Heart right ventricle (tissue), 16 donors: ENCODE measurements at regions of chr6 and their contacts with region 1.

Region 1: DNA sequence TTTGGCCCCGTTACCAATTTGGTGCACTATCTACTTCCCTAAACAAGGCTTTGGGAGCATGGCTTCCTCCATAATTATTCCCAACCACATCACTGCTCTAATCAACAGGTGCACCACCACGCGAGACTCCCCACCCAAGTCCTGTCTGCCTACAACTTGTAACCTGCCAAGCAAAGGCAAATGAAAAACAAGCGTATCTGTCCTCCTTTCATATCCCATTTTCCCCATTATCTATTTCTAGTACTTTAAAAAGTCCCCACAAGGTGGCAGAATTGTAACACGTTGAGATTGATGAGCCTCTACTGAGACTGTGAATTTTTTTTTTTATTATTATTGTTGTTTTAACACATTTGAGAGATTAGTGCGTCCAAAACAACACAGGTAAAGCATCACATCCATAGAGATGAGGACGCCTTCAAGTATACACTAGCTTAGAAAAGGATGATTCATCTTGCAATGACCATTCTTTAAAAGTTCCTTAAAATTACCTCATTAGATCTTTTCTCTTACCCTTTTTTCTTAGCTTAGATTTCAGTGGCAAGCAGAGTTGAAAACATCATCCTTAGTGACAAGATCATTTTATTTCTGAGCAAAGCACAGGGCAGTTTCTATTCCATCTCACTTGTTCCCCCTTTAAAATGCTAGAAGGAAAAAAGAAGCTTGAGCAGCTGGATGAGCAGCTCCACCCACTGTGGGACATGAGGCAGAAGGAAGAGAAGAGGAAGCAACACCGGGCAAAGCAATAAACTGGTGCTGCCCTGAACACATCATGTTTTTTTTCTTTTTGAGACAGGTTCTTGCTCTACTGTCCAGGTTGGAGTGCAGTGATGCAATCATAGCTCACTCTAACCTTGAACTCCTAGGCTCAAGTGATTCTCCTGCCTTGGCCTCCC is 210.8 kb downstream of the ARHGAP18 start:
- DNase-seq: no peak
- ATAC-seq: peak; percentile 18 to 57 (median 34)
- H3K4me3 ChIP-seq: no peak overlapping the region
- H3K27ac ChIP-seq: peak overlapping the region in 2 of 10 donors; percentile 33 to 53
- H3K4me1 ChIP-seq: peaks cover 3 to 64% (median 30%) of the 10 kb centered on the region in 9 donors
- H3K27me3 ChIP-seq: no peaks in the 10 kb centered on the region
- CTCF ChIP-seq: peak; percentile 27 to 75 (median 62)

Region 2: GRCh38 chr6:129454488-129454887 is 44.7 kb before region 1 on chr6:
- intact Hi-C with region 1: no loop called
- DNase-seq: no peak
- ATAC-seq: no peak
- H3K4me3 ChIP-seq: no peak overlapping the region
- H3K27ac ChIP-seq: no peak overlapping the region
- H3K4me1 ChIP-seq: peaks cover 0 to 8% (median 0%) of the 10 kb centered on the region in 9 donors
- H3K27me3 ChIP-seq: no peaks in the 10 kb centered on the region
- CTCF ChIP-seq: no peak

Region 3: GRCh38 chr6:129567374-129567773 is 68.2 kb after region 1 on chr6:
- intact Hi-C with region 1: loop called in 4 of 10 experiments (anchors 5 to 10 kb)
- DNase-seq: no peak
- ATAC-seq: peak in 1 of 8 donors; percentile 33
- H3K4me3 ChIP-seq: no peak overlapping the region
- H3K27ac ChIP-seq: no peak overlapping the region
- H3K4me1 ChIP-seq: no peaks in the 10 kb centered on the region
- H3K27me3 ChIP-seq: no peaks in the 10 kb centered on the region
- CTCF ChIP-seq: peak in 7 of 9 donors; percentile 20 to 48 (median 31)

Region 4: GRCh38 chr6:129575378-129576118 is 76.4 kb after region 1 on chr6:
- intact Hi-C with region 1: loop called in 7 of 10 experiments (anchors 2 to 10 kb)
- DNase-seq: peak in 1 of 2 donors; percentile 7
- ATAC-seq: peak; percentile 58 to 81 (median 72)
- H3K4me3 ChIP-seq: peak overlapping the region in 6 of 10 donors; percentile 16 to 42 (median 27)
- H3K27ac ChIP-seq: no peak overlapping the region
- H3K4me1 ChIP-seq: peaks cover 0 to 6% (median 0%) of the 10 kb centered on the region in 9 donors
- H3K27me3 ChIP-seq: no peaks in the 10 kb centered on the region
- CTCF ChIP-seq: peak; percentile 42 to 79 (median 72)

Region 5: GRCh38 chr6:129730477-129731165 is 231.4 kb after region 1 on chr6:
- intact Hi-C with region 1: loop called in 2 of 10 experiments (anchors 10 kb)
- DNase-seq: no peak
- ATAC-seq: peak in 4 of 8 donors; percentile 42 to 59 (median 54)
- H3K4me3 ChIP-seq: no peak overlapping the region
- H3K27ac ChIP-seq: no peak overlapping the region
- H3K4me1 ChIP-seq: peaks cover 0 to 15% (median 0%) of the 10 kb centered on the region in 9 donors
- H3K27me3 ChIP-seq: no peaks in the 10 kb centered on the region
- CTCF ChIP-seq: peak; percentile 16 to 69 (median 61)

Region 6: GRCh38 chr6:129748212-129748900 is 249.2 kb after region 1 on chr6:
- intact Hi-C with region 1: loop called in 1 of 10 experiments (anchors 10 kb)
- DNase-seq: no peak
- ATAC-seq: peak in 7 of 8 donors; percentile 43 to 80 (median 67)
- H3K4me3 ChIP-seq: peak overlapping the region in 2 of 10 donors; percentile 4 to 8
- H3K27ac ChIP-seq: peak overlapping the region in 9 of 10 donors; percentile 36 to 80 (median 45)
- H3K4me1 ChIP-seq: peaks cover 0 to 57% (median 30%) of the 10 kb centered on the region in 9 donors
- H3K27me3 ChIP-seq: no peaks in the 10 kb centered on the region
- CTCF ChIP-seq: no peak